ENCODE measurements at regions of chr4 and their contacts with region 1.

Region 1: DNA sequence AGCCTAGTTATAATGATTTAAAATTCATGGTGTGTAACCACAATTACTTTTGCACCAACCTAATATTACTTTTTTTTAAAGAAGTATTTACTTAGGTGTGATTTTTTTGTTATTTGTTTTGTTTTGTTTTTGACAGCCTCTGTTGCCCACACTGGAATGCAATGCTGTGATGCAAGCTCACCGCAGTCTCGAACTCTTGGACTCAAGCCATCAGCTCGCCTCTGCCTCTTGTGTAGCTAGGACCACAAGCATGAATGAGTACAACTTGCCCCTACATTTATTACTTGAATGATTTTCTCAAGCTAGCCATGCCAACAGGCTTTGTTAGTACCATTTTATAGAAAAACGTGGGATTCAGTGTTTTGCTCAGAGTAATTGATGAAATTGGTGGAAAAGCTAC is 488.8 kb upstream of the CPEB2 start:
- DNase-seq: no peak
- H3K4me3 ChIP-seq: no peak overlapping the region
- H3K27ac ChIP-seq: no peak overlapping the region
- H3K4me1 ChIP-seq: no peaks in the 10 kb centered on the region
- H3K27me3 ChIP-seq: no peaks in the 10 kb centered on the region
- CTCF ChIP-seq: no peak
- EP300 ChIP-seq: no peak
- POLR2A ChIP-seq: no peak

Region 2: GRCh38 chr4:14529653-14530052 is 16.2 kb after region 1 on chr4:
- intact Hi-C with region 1: loop called in 1 of 4 experiments (anchors 2 kb)
- DNase-seq: no peak
- H3K4me3 ChIP-seq: no peak overlapping the region
- H3K27ac ChIP-seq: no peak overlapping the region
- H3K4me1 ChIP-seq: no peaks in the 10 kb centered on the region
- H3K27me3 ChIP-seq: no peaks in the 10 kb centered on the region
- CTCF ChIP-seq: no peak
- EP300 ChIP-seq: no peak
- POLR2A ChIP-seq: no peak

Measured in ovary (tissue), 10 donors.